ENCODE measurements at regions of chr11 and their contacts with region 1.

Region 1: GRCh38 chr11:57712256-57713150 is at the start of gene TMX2:
- DNase-seq: peak; percentile 95
- ATAC-seq: peak; percentile 97
- total RNA-seq, gene TMX2: 56.9 TPM

Region 2: GRCh38 chr11:57588046-57588710 is 124.3 kb before region 1 on chr11:
- intact Hi-C with region 1: no loop called
- DNase-seq: no peak
- ATAC-seq: no peak

Region 3: DNA sequence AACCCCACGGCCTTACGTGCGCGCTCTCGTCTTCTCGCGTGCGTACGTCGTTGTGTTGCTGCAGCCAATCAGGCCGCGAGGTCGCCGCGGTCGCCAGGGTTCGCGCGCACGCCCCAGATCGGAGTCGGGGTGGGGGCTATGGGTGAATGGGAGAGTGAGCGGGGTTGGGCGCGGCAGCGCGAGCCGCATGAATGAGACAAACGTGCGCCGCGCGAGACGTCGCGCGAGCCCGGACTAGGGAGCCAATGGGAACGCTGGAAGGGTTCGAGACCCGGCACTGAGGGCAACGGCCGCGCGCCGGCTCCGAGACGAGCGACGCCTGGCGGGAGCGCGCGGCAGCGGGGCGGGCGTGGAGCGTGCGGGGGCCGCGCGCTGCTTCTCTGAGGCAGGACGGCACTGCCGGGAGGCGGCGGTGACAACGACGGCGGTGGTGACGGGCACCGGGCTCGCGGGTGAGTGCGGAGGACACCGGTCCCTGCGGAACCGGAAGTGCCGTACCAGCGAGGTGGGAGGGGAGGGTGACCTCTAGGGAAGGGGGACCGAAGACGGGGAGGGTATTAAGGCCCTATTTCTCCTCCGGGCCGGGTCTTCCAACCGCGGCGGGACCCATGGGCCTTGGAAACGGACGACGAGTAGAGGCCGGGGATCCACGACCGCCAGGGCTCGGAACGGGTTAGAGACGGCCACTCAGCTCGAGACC is 44.6 kb before region 1 on chr11 and contains the start of gene ZDHHC5:
- intact Hi-C with region 1: loop called (anchors 2 kb)
- DNase-seq: peak; percentile 100
- ATAC-seq: peak; percentile 96
- total RNA-seq, gene ZDHHC5: 44.9 TPM

Region 4: GRCh38 chr11:57741132-57742086 is 28.9 kb after region 1 on chr11 and contains the start of gene SELENOH:
- intact Hi-C with region 1: loop called (anchors 2 kb)
- DNase-seq: peak; percentile 96
- ATAC-seq: peak; percentile 99
- total RNA-seq, gene SELENOH: 72.9 TPM

Region 5: GRCh38 chr11:57778318-57779037 is 66.0 kb after region 1 on chr11:
- intact Hi-C with region 1: no loop called
- DNase-seq: peak; percentile 93
- ATAC-seq: peak; percentile 92

Measured in Right ventricle myocardium inferior (tissue), 1 donor.